Activated CD8-positive, alpha-beta memory T cell treated with anti-CD3 and anti-CD28 coated beads, Interleukin-2, amount 10 ng/mL, durations not matched to agents 7 days and 5 days (primary cell): ENCODE measurements at regions of chr16 and their contacts with region 1.

Region 1: GRCh38 chr16:50806099-50807062 is 64.5 kb downstream of the CYLD start:
- DNase-seq: peak; percentile 90
- ATAC-seq: peak; percentile 98
- H3K4me3 Mint-ChIP-seq: peak overlapping the region; percentile 72
- H3K27ac Mint-ChIP-seq: peak overlapping the region; percentile 78
- H3K4me1 Mint-ChIP-seq: peaks cover 11% of the 10 kb centered on the region
- H3K27me3 Mint-ChIP-seq: no peaks in the 10 kb centered on the region

Region 2: GRCh38 chr16:50210266-50211038 is 595.9 kb before region 1 on chr16:
- CTCF ChIA-PET with region 1: interaction called, 10 read pairs
- DNase-seq: peak; percentile 80
- ATAC-seq: peak; percentile 90
- H3K4me3 Mint-ChIP-seq: no peak overlapping the region
- H3K27ac Mint-ChIP-seq: peak overlapping the region; percentile 31
- H3K4me1 Mint-ChIP-seq: peaks cover 34% of the 10 kb centered on the region
- H3K27me3 Mint-ChIP-seq: no peaks in the 10 kb centered on the region

Region 3: DNA sequence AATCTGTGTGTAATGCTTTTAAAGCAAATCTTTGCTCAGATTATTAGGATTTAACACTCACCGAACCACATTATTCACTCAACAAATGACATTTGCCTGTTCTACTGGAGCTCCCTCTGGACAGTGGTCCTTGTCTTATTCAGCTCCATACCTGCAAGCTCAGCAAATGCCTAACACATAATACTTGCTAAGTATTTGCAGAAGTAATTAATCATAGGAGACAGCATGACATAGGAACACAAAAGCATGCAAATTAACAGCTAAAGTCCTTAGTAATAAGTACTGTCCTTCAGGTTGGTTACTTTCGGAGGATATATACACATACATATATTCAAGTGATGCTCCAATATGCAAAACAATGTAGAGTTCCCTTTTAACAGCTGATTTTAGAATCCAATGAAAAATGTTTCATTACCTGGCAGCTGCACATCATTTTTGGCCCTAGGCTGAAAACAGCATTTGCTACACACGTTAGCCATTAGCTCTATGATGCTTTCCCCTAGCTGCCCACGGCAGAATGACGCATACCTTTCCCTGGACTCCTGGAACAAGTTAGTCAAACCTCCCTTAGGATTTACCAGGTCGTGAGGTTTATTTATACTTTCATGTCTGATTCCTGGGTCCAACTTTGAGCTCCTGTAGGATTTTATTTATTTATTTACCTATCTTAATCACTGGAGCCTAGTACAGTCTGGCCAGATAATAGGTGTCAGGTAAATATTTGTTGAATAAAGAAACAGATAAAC is 446.2 kb before region 1 on chr16:
- CTCF ChIA-PET with region 1: interaction called, 19 read pairs
- DNase-seq: no peak
- ATAC-seq: no peak
- H3K4me3 Mint-ChIP-seq: no peak overlapping the region
- H3K27ac Mint-ChIP-seq: no peak overlapping the region
- H3K4me1 Mint-ChIP-seq: peaks cover 35% of the 10 kb centered on the region
- H3K27me3 Mint-ChIP-seq: no peaks in the 10 kb centered on the region

Region 4: DNA sequence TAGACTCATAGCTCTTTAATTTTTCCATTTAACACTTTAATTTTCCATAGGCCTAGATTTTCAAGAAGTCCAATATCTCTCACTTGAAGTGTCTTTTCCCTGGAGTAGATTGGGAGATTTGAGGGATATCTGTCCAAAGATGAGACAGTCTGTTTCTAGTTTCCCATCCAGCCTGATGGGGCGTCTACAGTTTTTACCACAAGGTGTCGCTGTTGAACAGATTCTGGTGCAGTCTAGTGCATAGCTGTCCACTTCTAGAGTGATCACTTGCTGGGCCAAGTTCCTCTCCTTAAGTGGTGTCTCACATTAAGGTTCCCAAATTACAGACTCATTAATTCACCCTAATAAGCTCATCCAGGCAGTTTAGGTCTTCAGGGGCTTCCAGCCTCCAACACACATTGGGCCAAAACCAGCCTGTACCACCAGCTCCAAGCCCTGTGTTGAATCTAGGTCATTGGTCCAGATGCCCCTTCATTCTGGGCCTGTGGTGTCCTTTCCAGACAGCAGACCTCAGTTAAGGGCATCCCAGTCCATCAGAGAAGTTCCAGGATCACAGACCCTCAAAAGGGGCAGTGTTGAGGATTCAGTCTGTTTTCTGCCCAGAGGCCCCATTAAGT is 134.6 kb before region 1 on chr16:
- CTCF ChIA-PET with region 1: interaction called, 136 read pairs
- DNase-seq: peak; percentile 76
- ATAC-seq: no peak
- H3K4me3 Mint-ChIP-seq: no peak overlapping the region
- H3K27ac Mint-ChIP-seq: peak overlapping the region; percentile 9
- H3K4me1 Mint-ChIP-seq: peaks cover 36% of the 10 kb centered on the region
- H3K27me3 Mint-ChIP-seq: no peaks in the 10 kb centered on the region

Region 5: GRCh38 chr16:50741808-50742575 is 64.4 kb before region 1 on chr16 and contains the start of gene CYLD:
- CTCF ChIA-PET with region 1: interaction called, 51 read pairs
- DNase-seq: peak; percentile 100
- ATAC-seq: peak; percentile 95
- H3K4me3 Mint-ChIP-seq: peak within 1 kb of the TSS; percentile 93
- H3K27ac Mint-ChIP-seq: peak within 1 kb of the TSS; percentile 95
- H3K4me1 Mint-ChIP-seq: peaks cover 38% of the 10 kb centered on the region
- H3K27me3 Mint-ChIP-seq: no peaks in the 10 kb centered on the region
- total RNA-seq, gene CYLD: 135 to 195 TPM

Region 6: GRCh38 chr16:50778284-50779163 is 27.9 kb before region 1 on chr16:
- CTCF ChIA-PET with region 1: interaction called, 20 read pairs
- DNase-seq: peak; percentile 46
- ATAC-seq: peak; percentile 74
- H3K4me3 Mint-ChIP-seq: peak overlapping the region; percentile 13
- H3K27ac Mint-ChIP-seq: peak overlapping the region; percentile 79
- H3K4me1 Mint-ChIP-seq: peaks cover 52% of the 10 kb centered on the region
- H3K27me3 Mint-ChIP-seq: no peaks in the 10 kb centered on the region

Region 7: DNA sequence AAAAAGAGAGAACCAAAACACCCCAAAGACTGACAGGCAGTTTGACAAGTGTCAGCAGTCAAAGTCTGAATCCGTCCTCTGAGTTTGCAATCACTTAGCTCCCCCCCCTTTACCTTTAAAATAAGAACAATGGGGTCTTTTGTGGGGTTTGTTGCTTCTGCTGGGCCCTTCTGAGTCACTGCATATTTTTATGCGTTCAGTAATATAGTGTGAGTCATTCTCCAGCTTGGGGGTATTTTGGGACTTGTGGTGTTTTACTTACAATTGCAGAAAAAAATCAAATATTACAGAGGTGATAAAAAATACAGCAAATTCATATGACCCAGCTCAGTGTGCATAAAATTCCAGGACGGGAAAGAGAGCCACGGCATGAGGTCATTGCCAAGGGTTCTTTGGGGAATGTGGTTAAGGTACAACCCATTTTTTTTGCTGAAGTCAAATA is 55.6 kb after region 1 on chr16:
- CTCF ChIA-PET with region 1: no interaction called
- DNase-seq: peak; percentile 12
- ATAC-seq: no peak
- H3K4me3 Mint-ChIP-seq: no peak overlapping the region
- H3K27ac Mint-ChIP-seq: no peak overlapping the region
- H3K4me1 Mint-ChIP-seq: no peaks in the 10 kb centered on the region
- H3K27me3 Mint-ChIP-seq: peaks cover 6% of the 10 kb centered on the region

Region 8: DNA sequence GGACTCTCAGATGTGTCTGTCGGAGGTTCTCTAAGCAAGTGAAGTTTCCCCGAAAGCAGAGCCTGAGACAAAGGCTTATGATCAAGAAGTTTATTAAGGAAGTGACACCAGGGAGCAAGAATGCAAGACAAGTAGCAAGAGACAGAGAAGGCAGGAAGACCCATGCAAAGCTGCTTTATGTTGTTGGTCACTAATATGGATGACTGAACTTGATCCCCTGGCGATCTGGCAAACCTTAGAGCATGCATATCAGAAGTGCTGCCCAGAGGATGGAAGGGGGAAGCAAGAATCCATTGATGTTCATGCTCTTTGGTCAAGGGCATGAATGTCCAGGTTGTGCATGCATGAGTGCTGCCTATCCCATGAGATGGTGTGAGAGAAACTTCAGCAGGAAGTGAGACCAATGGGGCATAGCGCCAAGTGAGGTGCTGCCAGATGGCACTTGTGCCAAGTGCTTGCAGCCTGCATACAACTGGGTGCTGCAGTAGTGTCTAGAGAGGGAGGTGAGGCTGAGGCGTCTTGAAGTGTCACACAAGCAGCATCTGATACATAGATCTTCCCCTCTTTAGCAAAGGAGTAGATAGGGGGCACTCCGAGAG is 168.2 kb after region 1 on chr16:
- CTCF ChIA-PET with region 1: no interaction called
- DNase-seq: no peak
- ATAC-seq: no peak
- H3K4me3 Mint-ChIP-seq: no peak overlapping the region
- H3K27ac Mint-ChIP-seq: no peak overlapping the region
- H3K4me1 Mint-ChIP-seq: no peaks in the 10 kb centered on the region
- H3K27me3 Mint-ChIP-seq: no peaks in the 10 kb centered on the region

Region 9: DNA sequence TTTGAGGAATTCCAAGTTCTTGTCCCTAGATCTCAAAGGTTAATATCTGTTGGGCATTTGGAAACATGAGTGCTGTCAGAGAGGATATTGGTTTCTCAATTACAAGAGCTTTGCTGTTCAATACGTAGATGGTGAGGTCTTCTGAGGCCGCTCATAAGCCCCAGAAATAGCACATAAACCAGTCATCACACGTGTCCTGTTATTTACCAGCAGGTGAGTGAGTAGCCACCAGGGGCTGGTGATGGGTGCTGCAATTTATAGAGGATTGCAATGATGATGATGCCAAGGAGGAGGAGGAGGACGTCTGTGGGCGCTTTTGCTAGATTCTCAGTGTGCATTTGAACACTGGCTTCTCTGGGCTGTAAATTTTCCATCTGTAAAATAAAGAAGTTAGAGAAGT is 255.7 kb after region 1 on chr16:
- CTCF ChIA-PET with region 1: no interaction called
- DNase-seq: no peak
- ATAC-seq: no peak
- H3K4me3 Mint-ChIP-seq: no peak overlapping the region
- H3K27ac Mint-ChIP-seq: no peak overlapping the region
- H3K4me1 Mint-ChIP-seq: no peaks in the 10 kb centered on the region
- H3K27me3 Mint-ChIP-seq: peaks cover 4% of the 10 kb centered on the region